ENCODE measurements at regions of chr1 and their contacts with region 1.

Region 1: DNA sequence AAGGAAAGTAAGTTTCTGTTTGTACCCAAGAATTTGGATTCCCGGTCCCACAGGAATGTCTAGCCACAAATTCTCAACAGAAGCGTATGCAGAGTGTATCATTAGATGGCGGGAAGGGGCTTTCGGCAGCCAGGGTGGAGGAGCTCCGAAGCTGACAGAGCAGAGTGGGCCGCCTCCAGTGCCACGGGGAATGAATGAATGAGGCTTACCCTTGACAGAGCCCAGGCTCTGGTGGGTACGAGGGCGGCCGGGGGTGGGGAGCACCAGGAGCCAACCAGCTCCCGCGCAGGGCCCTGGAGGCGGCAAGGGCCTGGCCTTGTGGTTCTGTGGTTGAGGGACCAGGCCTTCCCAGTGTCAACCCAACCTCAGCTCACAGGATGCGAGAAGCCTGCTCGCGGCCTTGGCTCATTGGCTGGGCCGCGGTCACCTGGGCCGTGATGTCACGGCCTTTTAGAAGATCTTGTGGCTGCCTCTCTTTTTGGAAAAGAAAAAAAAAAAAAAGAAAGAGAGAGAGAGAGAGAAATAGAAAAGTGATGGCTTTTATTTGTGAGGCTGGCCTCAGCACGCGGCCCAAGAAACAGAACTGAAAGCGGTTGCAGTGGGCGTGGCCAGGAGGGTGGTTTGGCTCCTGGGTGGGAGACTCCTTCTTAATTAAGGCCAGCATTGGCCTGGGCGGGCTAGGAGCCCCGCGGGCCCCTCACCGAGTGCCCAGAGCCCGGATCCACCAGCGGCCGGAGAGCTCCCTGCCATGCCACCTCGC is 34.9 kb upstream of the RUNX3 start:
- DNase-seq: peak; percentile 82 to 98 (median 93)
- H3K4me3 ChIP-seq: peak overlapping the region; percentile 53
- H3K4me3 Mint-ChIP-seq: peak overlapping the region; percentile 77 to 94 (median 88)
- H3K27ac ChIP-seq: peak overlapping the region; percentile 60
- H3K27ac Mint-ChIP-seq: peak overlapping the region; percentile 91 to 98 (median 95)
- H3K4me1 ChIP-seq: peaks cover 54% of the 10 kb centered on the region
- H3K4me1 Mint-ChIP-seq: peaks cover 65 to 80% (median 69%) of the 10 kb centered on the region in 3 donors
- H3K27me3 ChIP-seq: no peaks in the 10 kb centered on the region
- H3K27me3 Mint-ChIP-seq: peaks cover 0 to 3% of the 10 kb centered on the region in 2 donors

Region 2: GRCh38 chr1:24930204-24931145 is 34.5 kb before region 1 on chr1 and contains the start of gene RUNX3:
- CTCF ChIA-PET with region 1: interaction called, 35 read pairs
- POLR2A ChIA-PET with region 1: interaction called, 38 read pairs
- DNase-seq: peak; percentile 91 to 96 (median 95)
- H3K4me3 ChIP-seq: peak within 1 kb of the TSS; percentile 77
- H3K4me3 Mint-ChIP-seq: peak within 1 kb of the TSS; percentile 87 to 99 (median 97)
- H3K27ac ChIP-seq: peak within 1 kb of the TSS; percentile 89
- H3K27ac Mint-ChIP-seq: peak within 1 kb of the TSS; percentile 85 to 100 (median 100)
- H3K4me1 ChIP-seq: peaks cover 51% of the 10 kb centered on the region
- H3K4me1 Mint-ChIP-seq: peaks cover 34 to 69% (median 54%) of the 10 kb centered on the region in 3 donors
- H3K27me3 ChIP-seq: no peaks in the 10 kb centered on the region
- H3K27me3 Mint-ChIP-seq: peaks cover 0 to 10% of the 10 kb centered on the region in 2 donors
- total RNA-seq, gene RUNX3: 218 to 241 TPM

Region 3: DNA sequence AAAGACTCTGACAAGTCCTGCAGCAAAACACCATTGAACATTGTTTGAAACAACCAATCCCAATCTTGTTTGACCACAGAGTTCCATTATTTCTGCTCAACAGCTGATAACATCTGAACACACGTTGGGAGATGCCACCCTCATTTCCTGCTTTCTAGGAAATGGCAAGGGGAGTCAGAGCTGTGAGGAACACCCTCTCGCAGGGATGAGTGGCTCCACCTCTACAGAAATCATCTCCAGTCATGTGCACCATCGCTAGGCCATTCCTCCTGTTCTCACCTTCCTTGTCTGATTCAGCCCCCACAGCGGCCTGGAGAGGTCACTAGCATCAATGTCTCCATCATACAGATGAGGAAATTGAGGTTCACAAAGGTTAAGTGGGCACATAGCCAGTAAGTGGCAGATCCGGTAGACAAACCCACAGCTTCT is 12.6 kb before region 1 on chr1:
- CTCF ChIA-PET with region 1: interaction called, 34 read pairs
- POLR2A ChIA-PET with region 1: interaction called, 12 read pairs
- DNase-seq: peak in 3 of 5 donors; percentile 36 to 70 (median 65)
- H3K4me3 ChIP-seq: no peak overlapping the region
- H3K4me3 Mint-ChIP-seq: peak overlapping the region in 6 of 7 donors; percentile 42 to 78 (median 65)
- H3K27ac ChIP-seq: no peak overlapping the region
- H3K27ac Mint-ChIP-seq: peak overlapping the region; percentile 2 to 93 (median 78)
- H3K4me1 ChIP-seq: peaks cover 61% of the 10 kb centered on the region
- H3K4me1 Mint-ChIP-seq: peaks cover 71 to 95% (median 80%) of the 10 kb centered on the region in 3 donors
- H3K27me3 ChIP-seq: no peaks in the 10 kb centered on the region
- H3K27me3 Mint-ChIP-seq: peaks cover 0 to 2% of the 10 kb centered on the region in 2 donors

Region 4: GRCh38 chr1:24996983-24997893 is 32.2 kb after region 1 on chr1:
- CTCF ChIA-PET with region 1: interaction called, 55 read pairs
- POLR2A ChIA-PET with region 1: interaction called, 6 read pairs
- DNase-seq: peak in 4 of 5 donors; percentile 35 to 85 (median 74)
- H3K4me3 ChIP-seq: peak overlapping the region; percentile 2
- H3K4me3 Mint-ChIP-seq: peak overlapping the region; percentile 5 to 74 (median 58)
- H3K27ac ChIP-seq: no peak overlapping the region
- H3K27ac Mint-ChIP-seq: peak overlapping the region; percentile 70 to 94 (median 90)
- H3K4me1 ChIP-seq: peaks cover 68% of the 10 kb centered on the region
- H3K4me1 Mint-ChIP-seq: peaks cover 88 to 93% (median 92%) of the 10 kb centered on the region in 3 donors
- H3K27me3 ChIP-seq: no peaks in the 10 kb centered on the region
- H3K27me3 Mint-ChIP-seq: no peaks in the 10 kb centered on the region

Region 5: DNA sequence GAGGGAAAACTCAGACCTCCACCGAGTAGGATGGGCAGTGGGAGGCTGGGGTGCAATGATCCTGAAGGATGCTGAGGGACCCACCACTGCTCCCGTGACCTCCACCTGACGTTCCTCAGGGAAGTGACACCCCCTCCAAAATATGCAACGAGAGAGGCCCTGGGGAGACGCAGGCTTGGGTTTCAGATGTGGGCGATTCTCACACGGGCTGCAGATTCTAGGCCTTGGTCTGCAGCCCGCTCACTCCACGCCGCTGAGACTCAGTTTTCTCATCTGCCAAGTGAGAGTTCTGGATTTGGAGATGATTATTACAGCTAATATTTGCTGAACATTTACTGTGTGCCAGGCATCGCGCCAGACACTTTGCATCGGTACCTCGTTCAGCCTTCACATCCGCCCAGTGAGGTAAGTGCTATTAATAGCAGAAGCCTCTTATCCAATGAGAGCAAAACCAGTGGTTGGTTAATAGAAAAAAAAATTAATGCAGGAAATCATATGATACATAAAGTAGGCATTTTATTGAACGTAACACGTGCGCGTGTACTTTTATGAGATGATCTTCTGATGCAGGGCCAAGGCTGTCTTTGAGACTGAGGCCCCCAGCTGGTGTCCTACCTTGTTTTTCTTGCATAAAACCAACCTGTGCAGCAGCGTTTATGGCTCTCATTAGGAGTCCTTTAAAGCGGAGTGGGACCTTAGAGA is 67.1 kb after region 1 on chr1:
- CTCF ChIA-PET with region 1: interaction called, 205 read pairs
- POLR2A ChIA-PET with region 1: interaction called, 22 read pairs
- DNase-seq: peak; percentile 58 to 90 (median 78)
- H3K4me3 ChIP-seq: no peak overlapping the region
- H3K4me3 Mint-ChIP-seq: peak overlapping the region; percentile 56 to 93 (median 67)
- H3K27ac ChIP-seq: peak overlapping the region; percentile 14
- H3K27ac Mint-ChIP-seq: peak overlapping the region; percentile 91 to 99 (median 96)
- H3K4me1 ChIP-seq: peaks cover 93% of the 10 kb centered on the region
- H3K4me1 Mint-ChIP-seq: peaks cover 5 to 76% (median 62%) of the 10 kb centered on the region in 3 donors
- H3K27me3 ChIP-seq: no peaks in the 10 kb centered on the region
- H3K27me3 Mint-ChIP-seq: no peaks in the 10 kb centered on the region

Region 6: DNA sequence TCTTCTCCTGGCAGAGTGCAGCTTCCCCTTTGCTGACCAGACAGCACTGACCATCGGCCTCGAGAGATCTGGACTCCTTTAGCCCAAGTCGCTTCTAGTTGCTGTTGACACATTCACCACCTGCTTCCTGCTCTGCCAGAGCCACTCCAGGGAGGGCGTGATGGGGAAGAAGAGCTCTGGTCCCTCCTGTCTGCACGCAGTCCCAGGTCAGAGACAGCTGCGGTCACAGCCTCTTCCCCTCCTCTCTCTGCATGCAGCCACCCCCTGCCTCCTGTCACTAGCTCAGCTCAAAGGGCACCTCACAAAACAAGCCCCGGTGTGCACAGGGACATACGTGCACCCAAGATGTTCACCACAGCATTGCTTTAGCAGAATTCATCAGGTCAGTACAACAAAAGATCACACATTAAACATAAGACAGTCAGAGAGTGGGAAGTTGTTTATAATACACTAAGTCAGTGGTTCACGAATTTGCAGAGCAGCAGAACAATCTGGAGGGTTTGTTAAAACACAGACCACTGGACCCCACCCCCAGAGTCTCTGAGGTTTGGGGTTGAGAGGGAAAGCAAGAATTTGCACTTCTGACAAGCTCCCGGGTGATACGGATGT is 134.5 kb after region 1 on chr1:
- CTCF ChIA-PET with region 1: interaction called, 30 read pairs
- POLR2A ChIA-PET with region 1: interaction called, 20 read pairs
- DNase-seq: peak; percentile 22 to 78 (median 44)
- H3K4me3 ChIP-seq: peak overlapping the region; percentile 30
- H3K4me3 Mint-ChIP-seq: peak overlapping the region; percentile 34 to 89 (median 76)
- H3K27ac ChIP-seq: peak overlapping the region; percentile 0
- H3K27ac Mint-ChIP-seq: peak overlapping the region; percentile 25 to 95 (median 90)
- H3K4me1 ChIP-seq: peaks cover 71% of the 10 kb centered on the region
- H3K4me1 Mint-ChIP-seq: peaks cover 71 to 78% (median 75%) of the 10 kb centered on the region in 3 donors
- H3K27me3 ChIP-seq: no peaks in the 10 kb centered on the region
- H3K27me3 Mint-ChIP-seq: no peaks in the 10 kb centered on the region